A549 (cell line): ENCODE measurements at regions of chr19 and their contacts with region 1.

Region 1: GRCh38 chr19:39671738-39672363 is 16.1 kb downstream of the LGALS16 start:
- DNase-seq: peak; percentile 69 to 83
- ATAC-seq: peak; percentile 95 to 98
- H3K4me3 ChIP-seq: no peak overlapping the region
- H3K27ac ChIP-seq: no peak overlapping the region
- H3K4me1 ChIP-seq: peaks cover 5% of the 10 kb centered on the region; the same call in 1 of the 3 replicates
- CTCF ChIP-seq: peak; percentile 99
- EP300 ChIP-seq: no peak
- POLR2A ChIP-seq: no peak
- RAD21 ChIP-seq: peak; percentile 99 to 100

Region 2: GRCh38 chr19:39474139-39474622 is 197.7 kb before region 1 on chr19:
- CTCF ChIA-PET with region 1: interaction called, 37 read pairs
- POLR2A ChIA-PET with region 1: no interaction called
- DNase-seq: peak; percentile 64 to 89
- ATAC-seq: peak; percentile 58 to 87; a peak in 5 of 6 replicates
- H3K4me3 ChIP-seq: no peak overlapping the region
- H3K27ac ChIP-seq: no peak overlapping the region
- H3K4me1 ChIP-seq: peaks cover 13% of the 10 kb centered on the region
- CTCF ChIP-seq: peak; percentile 97
- EP300 ChIP-seq: no peak
- POLR2A ChIP-seq: no peak
- RAD21 ChIP-seq: peak; percentile 61 to 69; a peak in 4 of 5 replicates

Region 3: GRCh38 chr19:39514840-39515550 is 156.9 kb before region 1 on chr19 and contains the start of gene SELENOV:
- CTCF ChIA-PET with region 1: interaction called, 14 read pairs
- POLR2A ChIA-PET with region 1: no interaction called
- DNase-seq: no peak
- ATAC-seq: peak; percentile 48 to 64
- H3K4me3 ChIP-seq: peak within 1 kb of the TSS; percentile 42
- H3K27ac ChIP-seq: peak within 1 kb of the TSS in 1 of 2 experiments; percentile 66; a peak in 3 of 6 replicates
- H3K4me1 ChIP-seq: peaks cover 9% of the 10 kb centered on the region; the same call in 2 of the 3 replicates
- CTCF ChIP-seq: 0 out of 3 replicates have a peak, but pooled peaks have one; percentile 6
- EP300 ChIP-seq: no peak
- POLR2A ChIP-seq: no peak
- RAD21 ChIP-seq: 0 out of 5 replicates have a peak, but pooled peaks of 1 of the 2 experiments have one; percentile 10
- polyA plus RNA-seq, gene SELENOV: not detected in 2 replicates

Region 4: DNA sequence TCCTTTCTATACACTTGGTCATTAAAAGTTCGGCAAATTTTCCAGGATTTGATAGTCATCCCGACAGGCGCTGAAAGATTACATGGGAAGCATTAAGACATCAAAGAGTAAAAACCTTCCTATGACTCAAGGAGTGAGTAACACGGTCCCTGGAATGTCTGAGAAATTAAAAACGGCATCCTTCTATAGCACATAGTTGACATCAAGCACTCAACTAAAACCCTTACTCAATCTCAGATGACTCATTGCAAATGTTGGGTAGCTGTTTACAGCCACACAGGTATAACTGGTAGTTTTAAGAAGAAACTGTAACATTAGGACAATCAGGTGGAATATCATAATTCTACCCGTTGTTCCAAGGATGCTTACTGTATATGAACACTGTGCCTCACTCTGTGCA is 75.9 kb before region 1 on chr19:
- CTCF ChIA-PET with region 1: interaction called, 15 read pairs
- POLR2A ChIA-PET with region 1: no interaction called
- DNase-seq: no peak
- ATAC-seq: no peak; a peak in 1 of 6 replicates
- H3K4me3 ChIP-seq: no peak overlapping the region
- H3K27ac ChIP-seq: no peak overlapping the region
- H3K4me1 ChIP-seq: no peaks in the 10 kb centered on the region
- CTCF ChIP-seq: no peak
- EP300 ChIP-seq: no peak
- POLR2A ChIP-seq: no peak
- RAD21 ChIP-seq: no peak

Region 5: GRCh38 chr19:39647918-39648317 is 23.9 kb before region 1 on chr19:
- CTCF ChIA-PET with region 1: interaction called, 37 read pairs
- POLR2A ChIA-PET with region 1: no interaction called
- DNase-seq: no peak
- ATAC-seq: no peak
- H3K4me3 ChIP-seq: no peak overlapping the region
- H3K27ac ChIP-seq: no peak overlapping the region
- H3K4me1 ChIP-seq: no peaks in the 10 kb centered on the region
- CTCF ChIP-seq: no peak
- EP300 ChIP-seq: no peak
- POLR2A ChIP-seq: no peak
- RAD21 ChIP-seq: no peak

Region 6: GRCh38 chr19:39684263-39684662 is 12.4 kb after region 1 on chr19:
- CTCF ChIA-PET with region 1: interaction called, 53 read pairs
- POLR2A ChIA-PET with region 1: no interaction called
- DNase-seq: no peak
- ATAC-seq: no peak
- H3K4me3 ChIP-seq: no peak overlapping the region
- H3K27ac ChIP-seq: no peak overlapping the region
- H3K4me1 ChIP-seq: no peaks in the 10 kb centered on the region
- CTCF ChIP-seq: no peak
- EP300 ChIP-seq: no peak
- POLR2A ChIP-seq: no peak
- RAD21 ChIP-seq: no peak

Region 7: DNA sequence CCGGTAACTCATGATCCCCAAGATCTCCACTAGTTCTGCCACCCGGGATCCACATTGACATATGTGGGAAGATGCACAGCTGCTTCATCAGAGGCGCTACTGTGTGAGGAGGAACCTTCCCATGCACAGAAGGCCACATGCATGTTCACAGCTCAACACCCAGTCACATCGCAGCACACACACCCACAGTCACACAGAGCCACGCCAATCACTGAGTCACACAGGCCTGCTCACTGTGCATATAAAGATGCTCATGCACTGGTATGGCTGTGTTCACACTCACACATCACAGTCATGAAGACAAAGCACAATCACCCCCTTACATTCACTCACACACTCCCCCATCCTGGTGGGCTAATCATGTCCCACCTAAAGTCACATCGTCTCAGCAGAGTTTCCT is 56.2 kb after region 1 on chr19:
- CTCF ChIA-PET with region 1: no interaction called
- POLR2A ChIA-PET with region 1: no interaction called
- DNase-seq: no peak
- ATAC-seq: peak in 1 of 2 experiments; percentile 49; a peak in 2 of 6 replicates
- H3K4me3 ChIP-seq: no peak overlapping the region
- H3K27ac ChIP-seq: no peak overlapping the region
- H3K4me1 ChIP-seq: no peaks in the 10 kb centered on the region
- CTCF ChIP-seq: no peak
- EP300 ChIP-seq: no peak
- POLR2A ChIP-seq: peak; percentile 8; the same call in 1 of the 2 replicates
- RAD21 ChIP-seq: no peak

Region 8: DNA sequence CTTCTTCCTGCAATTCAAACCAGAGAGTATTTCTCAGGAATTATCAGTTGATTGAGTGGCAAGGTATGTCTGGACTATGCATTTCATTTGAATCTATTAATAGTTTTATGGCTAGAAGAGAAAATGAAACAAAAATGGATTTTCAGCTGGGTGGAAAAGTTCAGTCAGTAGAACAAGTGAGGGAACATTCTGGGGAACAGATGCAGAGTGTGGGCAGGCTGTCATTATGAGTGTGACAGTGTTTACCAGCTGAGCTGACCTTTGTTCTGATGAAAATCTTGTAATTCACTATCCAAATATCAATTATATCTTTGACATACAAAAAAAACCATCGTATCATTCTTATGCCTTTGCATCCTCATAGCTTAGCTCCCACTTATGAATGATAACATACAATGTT is 68.5 kb after region 1 on chr19:
- CTCF ChIA-PET with region 1: no interaction called
- POLR2A ChIA-PET with region 1: no interaction called
- DNase-seq: no peak
- ATAC-seq: no peak
- H3K4me3 ChIP-seq: no peak overlapping the region
- H3K27ac ChIP-seq: no peak overlapping the region
- H3K4me1 ChIP-seq: no peaks in the 10 kb centered on the region
- CTCF ChIP-seq: no peak
- EP300 ChIP-seq: no peak
- POLR2A ChIP-seq: no peak
- RAD21 ChIP-seq: no peak

Region 9: GRCh38 chr19:39792999-39793546 is 121.2 kb after region 1 on chr19:
- CTCF ChIA-PET with region 1: interaction called, 11 read pairs
- POLR2A ChIA-PET with region 1: no interaction called
- DNase-seq: peak; percentile 88 to 99
- ATAC-seq: peak; percentile 97 to 99
- H3K4me3 ChIP-seq: peak overlapping the region; percentile 40
- H3K27ac ChIP-seq: 0 out of 6 replicates have a peak overlapping the region, but pooled peaks of 1 of the 2 experiments have one; percentile 37
- H3K4me1 ChIP-seq: no peaks in the 10 kb centered on the region
- CTCF ChIP-seq: peak; percentile 100
- EP300 ChIP-seq: no peak
- POLR2A ChIP-seq: no peak
- RAD21 ChIP-seq: peak; percentile 97 to 99